ENCODE measurements at regions of chr6 and their contacts with region 1.

Region 1: GRCh38 chr6:133568970-133569889 is 319.7 kb upstream of the TCF21 start:
- DNase-seq: peak in 2 of 4 donors; percentile 13 to 21
- ATAC-seq: peak; percentile 68
- H3K4me3 ChIP-seq: no peak overlapping the region
- H3K27ac ChIP-seq: no peak overlapping the region
- H3K4me1 ChIP-seq: no peaks in the 10 kb centered on the region
- H3K27me3 ChIP-seq: no peaks in the 10 kb centered on the region
- CTCF ChIP-seq: peak; percentile 55 to 87 (median 78)
- POLR2A ChIP-seq: no peak

Region 2: DNA sequence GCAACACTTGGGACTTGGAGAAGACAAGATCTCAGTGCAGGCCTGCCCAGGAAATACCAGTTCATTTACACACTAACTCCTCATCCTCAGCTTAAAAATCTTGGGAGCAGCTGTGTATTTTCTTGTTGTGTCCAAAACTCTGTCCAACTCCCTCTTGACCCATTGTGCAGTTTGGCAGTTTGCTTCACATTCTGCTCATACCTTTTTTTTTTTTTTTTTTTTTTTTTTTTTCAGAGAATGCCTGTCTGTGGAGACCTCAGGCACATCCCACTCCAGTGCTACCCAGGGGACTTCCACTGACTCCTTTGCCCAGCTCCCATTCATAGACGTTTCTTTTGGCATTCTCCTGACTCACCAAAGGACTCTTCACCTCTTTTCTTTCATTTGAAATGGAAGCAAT is 53.8 kb after region 1 on chr6:
- intact Hi-C with region 1: no loop called
- DNase-seq: peak in 1 of 4 donors; percentile 9
- ATAC-seq: no peak
- H3K4me3 ChIP-seq: no peak overlapping the region
- H3K27ac ChIP-seq: no peak overlapping the region
- H3K4me1 ChIP-seq: no peaks in the 10 kb centered on the region
- H3K27me3 ChIP-seq: no peaks in the 10 kb centered on the region
- CTCF ChIP-seq: no peak
- POLR2A ChIP-seq: no peak

Region 3: DNA sequence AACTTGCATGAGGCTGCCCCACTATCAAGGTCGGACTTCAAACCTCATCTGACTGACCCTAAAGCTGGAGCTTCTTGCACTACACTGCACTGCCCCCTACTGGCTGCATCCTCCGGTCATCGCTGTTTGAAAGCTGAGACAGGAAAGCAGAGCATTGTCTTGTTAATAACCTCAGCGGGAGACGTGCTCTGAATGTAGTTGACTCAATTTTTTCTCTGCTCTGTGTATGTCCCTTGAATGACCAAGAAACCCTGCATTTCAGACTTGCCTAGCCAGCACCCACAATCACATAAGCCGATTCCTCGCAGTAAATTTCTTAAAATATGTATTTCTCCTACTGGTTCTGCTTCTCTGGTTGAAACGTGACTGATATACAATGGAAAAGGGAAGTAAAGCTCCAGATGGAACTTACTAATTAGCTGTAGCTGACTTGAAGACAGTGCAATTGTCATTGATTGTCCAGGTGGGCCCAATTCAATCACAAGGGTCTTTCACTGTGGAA is 347.5 kb after region 1 on chr6:
- intact Hi-C with region 1: loop called (anchors 10 kb)
- DNase-seq: peak; percentile 81 to 89 (median 84)
- ATAC-seq: peak; percentile 58
- H3K4me3 ChIP-seq: no peak overlapping the region
- H3K27ac ChIP-seq: no peak overlapping the region
- H3K4me1 ChIP-seq: no peaks in the 10 kb centered on the region
- H3K27me3 ChIP-seq: no peaks in the 10 kb centered on the region
- CTCF ChIP-seq: peak; percentile 64 to 82 (median 72)
- POLR2A ChIP-seq: no peak

Region 4: DNA sequence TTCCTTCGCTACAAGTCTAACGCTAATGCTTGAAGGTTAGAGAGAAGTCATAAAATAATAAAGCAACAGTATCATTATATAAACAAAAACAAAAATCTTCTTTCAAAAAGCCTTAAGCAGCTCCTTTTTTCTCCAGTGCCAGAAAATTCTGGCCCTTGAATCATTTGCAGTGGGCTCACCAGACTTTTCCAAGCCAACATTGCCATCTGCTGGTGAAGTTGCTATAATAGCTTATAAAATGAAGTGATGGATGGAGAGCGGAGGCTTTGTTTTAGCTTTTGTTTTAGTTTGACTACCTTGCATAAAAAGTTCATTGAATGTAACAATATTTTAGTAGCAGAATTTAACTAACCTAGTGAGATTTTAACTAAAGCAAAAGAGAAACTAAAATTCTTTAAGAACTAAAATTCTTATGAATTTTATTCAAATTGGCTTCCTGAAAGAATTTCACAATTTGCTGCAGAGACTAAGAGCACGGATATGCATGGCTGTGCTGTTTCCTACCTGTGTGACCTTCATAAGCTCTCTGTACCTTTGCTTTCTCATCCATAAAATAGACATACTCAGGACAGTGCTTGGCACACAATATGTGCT is 528.0 kb after region 1 on chr6:
- intact Hi-C with region 1: loop called (anchors 10 kb)
- DNase-seq: peak; percentile 61 to 72 (median 66)
- ATAC-seq: peak; percentile 66
- H3K4me3 ChIP-seq: no peak overlapping the region
- H3K27ac ChIP-seq: no peak overlapping the region
- H3K4me1 ChIP-seq: no peaks in the 10 kb centered on the region
- H3K27me3 ChIP-seq: no peaks in the 10 kb centered on the region
- CTCF ChIP-seq: peak in 6 of 7 experiments; percentile 49 to 77 (median 70)
- POLR2A ChIP-seq: no peak

Measured in body of pancreas (tissue), 4 donors.